ENCODE measurements at regions of chr9 and their contacts with region 1.

Region 1: DNA sequence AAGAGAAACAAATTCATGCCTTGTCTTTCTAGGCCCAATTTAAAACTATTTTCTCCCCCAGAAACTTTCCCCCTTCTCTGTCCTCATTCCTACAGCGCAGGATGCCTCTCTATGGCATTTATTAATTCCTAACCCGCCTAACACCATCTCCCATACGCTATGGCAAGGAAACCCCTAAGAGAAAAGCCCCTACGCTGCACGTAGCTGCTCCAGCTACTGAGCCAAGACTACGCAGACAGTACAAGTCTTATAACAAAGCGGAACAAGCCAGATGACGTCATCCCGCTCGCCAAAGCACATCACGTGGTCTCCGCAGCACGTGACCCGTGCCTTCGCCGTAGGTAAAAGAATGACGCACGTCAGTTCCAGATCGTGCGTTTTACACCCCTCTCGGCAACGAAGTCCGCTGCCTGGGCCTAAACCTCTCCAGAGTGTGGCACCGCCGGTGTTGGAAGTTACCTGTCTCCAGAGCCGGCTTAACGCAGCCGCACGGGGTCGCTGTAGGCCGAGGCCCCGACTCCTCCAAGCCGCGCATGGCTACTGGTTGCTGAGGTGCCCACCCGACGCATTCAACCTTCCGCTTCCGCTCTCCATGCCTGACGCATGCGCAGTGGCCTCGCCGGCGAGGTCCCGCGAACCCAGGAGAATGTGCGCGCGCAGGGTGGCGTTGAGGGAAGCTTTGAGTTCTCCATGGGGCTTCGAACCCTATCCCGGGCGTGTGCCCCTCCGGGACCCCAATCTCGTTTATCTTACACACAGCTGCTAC is at the start of gene TRMO:
- H3K4me3 Mint-ChIP-seq: peak within 1 kb of the TSS; percentile 95
- H3K27ac Mint-ChIP-seq: peak within 1 kb of the TSS; percentile 99
- H3K4me1 Mint-ChIP-seq: peaks cover 44% of the 10 kb centered on the region
- H3K27me3 Mint-ChIP-seq: no peaks in the 10 kb centered on the region

Region 2: GRCh38 chr9:97632985-97633858 is 288.9 kb before region 1 on chr9 and contains the starts of genes NCBP1 and TSTD2:
- intact Hi-C with region 1: loop called (anchors 5 kb)
- H3K4me3 Mint-ChIP-seq: peak within 1 kb of the TSS; percentile 98
- H3K27ac Mint-ChIP-seq: peak within 1 kb of the TSS; percentile 99
- H3K4me1 Mint-ChIP-seq: peaks cover 52% of the 10 kb centered on the region
- H3K27me3 Mint-ChIP-seq: no peaks in the 10 kb centered on the region

Region 3: GRCh38 chr9:97906236-97906831 is 15.8 kb before region 1 on chr9:
- intact Hi-C with region 1: loop called (anchors 1 kb)
- H3K4me3 Mint-ChIP-seq: peak overlapping the region; percentile 51
- H3K27ac Mint-ChIP-seq: peak overlapping the region; percentile 89
- H3K4me1 Mint-ChIP-seq: peaks cover 46% of the 10 kb centered on the region
- H3K27me3 Mint-ChIP-seq: no peaks in the 10 kb centered on the region

Region 4: DNA sequence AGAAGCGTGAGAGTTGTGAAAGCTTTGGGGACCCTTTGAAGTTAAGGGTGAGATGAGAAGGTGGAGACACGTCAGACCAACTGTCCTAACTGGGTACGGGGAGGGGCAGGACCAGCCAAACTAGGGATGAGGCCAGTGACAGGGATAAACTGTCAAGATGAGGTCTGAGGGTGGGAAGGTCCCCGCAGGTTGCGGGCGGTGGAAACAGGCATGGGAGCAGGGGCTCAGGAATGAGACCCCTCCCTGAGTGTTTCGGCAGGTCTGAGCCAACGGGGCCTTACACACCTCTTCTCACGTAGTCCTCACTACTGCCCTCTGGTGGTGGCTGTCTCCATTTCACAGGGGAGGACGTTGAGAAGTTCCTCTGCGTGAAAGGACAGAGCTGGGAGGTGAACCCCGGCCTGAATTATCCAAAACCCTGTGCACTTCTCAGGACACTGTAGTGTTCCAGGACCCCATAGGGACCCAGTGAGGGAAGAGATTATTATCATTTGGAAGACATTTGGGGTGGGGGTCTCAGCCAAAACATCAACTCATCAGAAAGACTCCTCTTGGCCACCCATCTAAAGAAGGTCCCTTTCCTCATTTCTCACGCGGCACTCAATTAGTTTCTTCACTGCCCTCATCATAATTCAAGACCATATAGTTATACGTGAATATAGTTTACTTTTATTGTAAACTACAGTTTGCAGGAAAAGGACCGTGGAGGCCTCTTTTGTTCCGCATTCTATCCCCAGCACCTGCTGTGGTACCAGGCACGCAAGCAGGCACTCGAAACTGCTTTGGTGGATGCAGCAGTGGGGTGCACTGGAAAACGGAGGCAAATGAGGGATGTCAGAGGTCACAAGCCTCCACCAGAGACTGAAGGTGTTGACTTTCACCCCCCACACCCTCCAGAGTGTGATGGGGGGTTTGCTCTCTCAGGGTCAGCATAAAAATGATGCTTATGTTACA is 112.7 kb after region 1 on chr9:
- intact Hi-C with region 1: loop called (anchors 5 kb)
- H3K4me3 Mint-ChIP-seq: no peak overlapping the region
- H3K27ac Mint-ChIP-seq: peak overlapping the region; percentile 51
- H3K4me1 Mint-ChIP-seq: peaks cover 47% of the 10 kb centered on the region
- H3K27me3 Mint-ChIP-seq: peaks cover 2% of the 10 kb centered on the region

Region 5: GRCh38 chr9:98207606-98208005 is 285.5 kb after region 1 on chr9:
- intact Hi-C with region 1: loop called (anchors 5 kb)
- H3K4me3 Mint-ChIP-seq: no peak overlapping the region
- H3K27ac Mint-ChIP-seq: no peak overlapping the region
- H3K4me1 Mint-ChIP-seq: peaks cover 5% of the 10 kb centered on the region
- H3K27me3 Mint-ChIP-seq: no peaks in the 10 kb centered on the region

Measured in dendritic cell treated with granulocyte-macrophage colony-stimulating factor and Interleukin-4, amounts not matched to agents 40 ng/mL and 50 ng/mL, for 4 days (primary cell).